WTC11 (cell line): ENCODE measurements at regions of chr4 and their contacts with region 1.

Region 1: DNA sequence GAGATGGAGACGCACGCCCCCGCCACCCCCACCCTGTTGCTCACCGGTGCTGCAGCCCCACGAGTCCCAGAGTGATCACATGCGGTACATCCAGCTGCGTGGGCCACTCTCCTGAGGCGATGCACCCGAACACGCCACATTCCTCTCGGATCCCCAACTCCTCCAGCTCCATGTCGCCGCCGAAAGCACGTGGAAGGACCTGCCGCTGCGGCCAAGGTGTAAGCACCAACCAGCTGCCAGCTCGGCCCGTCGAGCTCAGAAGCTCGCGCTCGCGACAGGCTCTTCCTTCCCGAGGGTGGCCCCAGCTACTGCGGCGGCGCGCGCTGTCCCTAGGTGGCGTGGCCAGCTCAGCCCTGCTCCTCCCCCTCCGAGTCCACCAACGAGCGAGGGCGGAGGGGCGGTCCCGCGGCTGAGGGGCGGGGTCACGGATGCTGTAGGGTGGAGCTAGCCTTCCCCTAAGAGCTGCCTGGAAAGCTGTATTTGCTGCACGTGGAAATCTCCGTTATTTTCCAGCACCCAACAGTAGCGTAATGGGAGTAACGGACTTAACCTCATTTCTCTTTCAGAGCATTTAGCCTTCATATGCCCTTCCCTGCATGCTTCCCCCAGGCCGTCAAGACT is at the start of gene PPAT:
- DNase-seq: peak; percentile 98
- ATAC-seq: peak; percentile 89
- H3K4me3 Mint-ChIP-seq: peak within 1 kb of the TSS; percentile 97
- H3K27ac Mint-ChIP-seq: peak within 1 kb of the TSS; percentile 98
- H3K4me1 Mint-ChIP-seq: peaks cover 43% of the 10 kb centered on the region
- H3K27me3 Mint-ChIP-seq: no peaks in the 10 kb centered on the region; the same call in 1 of the 2 replicates
- CTCF ChIP-seq: no peak
- total RNA-seq, gene PPAT: 83.4 to 91.0 TPM (median 89.0 TPM) in 3 replicates

Region 2: GRCh38 chr4:56387023-56388001 is 48.1 kb before region 1 on chr4 and contains the start of gene AASDH:
- CTCF ChIA-PET with region 1: interaction called, 11 read pairs
- POLR2A ChIA-PET with region 1: interaction called, 87 read pairs
- DNase-seq: peak; percentile 96
- ATAC-seq: peak; percentile 91
- H3K4me3 Mint-ChIP-seq: peak within 1 kb of the TSS; percentile 88
- H3K27ac Mint-ChIP-seq: peak within 1 kb of the TSS; percentile 100
- H3K4me1 Mint-ChIP-seq: peaks cover 25% of the 10 kb centered on the region
- H3K27me3 Mint-ChIP-seq: no peaks in the 10 kb centered on the region; the same call in 1 of the 2 replicates
- CTCF ChIP-seq: no peak
- total RNA-seq, gene AASDH: 12.6 to 15.6 TPM (median 14.6 TPM) in 3 replicates

Region 3: DNA sequence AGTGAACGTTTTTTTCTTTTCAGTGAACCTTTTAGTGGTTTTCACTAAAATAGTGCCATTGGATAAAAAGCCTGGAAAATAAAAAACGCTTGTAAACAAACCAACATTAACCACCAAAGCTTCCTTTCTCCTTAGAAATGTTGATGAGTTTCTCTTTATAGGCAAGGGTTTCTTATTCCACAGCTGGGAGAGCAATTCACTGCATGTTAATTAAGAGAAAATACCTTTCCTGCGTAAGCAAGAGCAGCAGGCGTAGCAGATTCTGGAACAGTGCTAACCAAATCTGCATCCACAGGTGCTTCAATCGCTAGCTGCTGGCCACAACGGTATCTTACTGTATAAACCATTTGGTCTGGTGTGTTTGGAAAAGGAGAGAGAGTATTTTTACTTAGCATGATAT is 34.9 kb before region 1 on chr4:
- CTCF ChIA-PET with region 1: interaction called, 6 read pairs
- POLR2A ChIA-PET with region 1: interaction called, 12 read pairs
- DNase-seq: peak; percentile 31
- ATAC-seq: peak; percentile 86
- H3K4me3 Mint-ChIP-seq: peak overlapping the region; percentile 20
- H3K27ac Mint-ChIP-seq: peak overlapping the region; percentile 98
- H3K4me1 Mint-ChIP-seq: peaks cover 26% of the 10 kb centered on the region
- H3K27me3 Mint-ChIP-seq: no peaks in the 10 kb centered on the region
- CTCF ChIP-seq: no peak

Region 4: DNA sequence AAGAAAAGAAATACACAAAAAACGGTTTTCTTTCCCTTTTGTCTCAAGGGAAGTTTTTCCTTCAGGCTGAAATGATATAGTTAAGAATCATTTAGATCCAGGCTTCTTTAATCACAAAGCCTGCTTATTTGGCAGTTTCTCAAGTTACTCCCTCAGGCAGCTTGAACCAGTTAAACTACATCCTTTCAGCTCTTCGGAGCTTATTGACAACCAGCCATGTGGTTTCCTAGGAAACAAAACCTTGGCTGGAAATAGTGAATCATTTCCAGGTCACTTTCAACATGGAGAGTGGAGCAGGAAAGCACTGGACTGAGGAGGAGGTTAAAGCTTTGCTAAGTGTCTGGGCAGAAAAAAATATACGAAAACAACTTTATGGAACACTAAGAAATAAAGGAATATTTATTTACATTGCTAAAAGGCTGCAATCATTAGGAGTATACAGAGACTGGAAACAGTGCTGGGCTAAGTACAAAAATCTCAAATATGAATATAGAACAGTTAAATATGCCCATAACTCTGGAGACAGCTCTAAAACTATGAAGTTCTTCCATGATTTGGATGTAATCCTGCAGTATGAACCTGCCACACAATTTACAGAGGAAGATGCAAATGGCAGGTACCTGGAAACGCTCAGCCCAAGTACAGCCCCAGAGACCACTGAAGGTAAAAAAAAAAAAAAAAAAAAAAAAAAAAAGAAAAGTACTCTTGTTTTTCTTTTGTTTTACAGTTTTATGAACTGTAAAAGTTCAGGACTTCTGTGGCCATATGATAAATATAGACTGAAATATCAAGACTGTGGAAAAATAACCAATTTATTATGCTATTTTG is 25.0 kb before region 1 on chr4:
- CTCF ChIA-PET with region 1: interaction called, 10 read pairs
- POLR2A ChIA-PET with region 1: interaction called, 23 read pairs
- DNase-seq: no peak
- ATAC-seq: peak; percentile 86
- H3K4me3 Mint-ChIP-seq: peak overlapping the region; percentile 58
- H3K27ac Mint-ChIP-seq: peak overlapping the region; percentile 98
- H3K4me1 Mint-ChIP-seq: peaks cover 61% of the 10 kb centered on the region
- H3K27me3 Mint-ChIP-seq: no peaks in the 10 kb centered on the region
- CTCF ChIP-seq: no peak

Region 5: GRCh38 chr4:56424697-56425514 is 10.5 kb before region 1 on chr4:
- CTCF ChIA-PET with region 1: interaction called, 16 read pairs
- POLR2A ChIA-PET with region 1: interaction called, 23 read pairs
- DNase-seq: no peak
- ATAC-seq: no peak
- H3K4me3 Mint-ChIP-seq: peak overlapping the region; percentile 49; the same call in 1 of the 2 replicates
- H3K27ac Mint-ChIP-seq: peak overlapping the region; percentile 75; the same call in 1 of the 2 replicates
- H3K4me1 Mint-ChIP-seq: peaks cover 40% of the 10 kb centered on the region
- H3K27me3 Mint-ChIP-seq: no peaks in the 10 kb centered on the region
- CTCF ChIP-seq: peak; percentile 39; the same call in 1 of the 2 replicates

Region 6: DNA sequence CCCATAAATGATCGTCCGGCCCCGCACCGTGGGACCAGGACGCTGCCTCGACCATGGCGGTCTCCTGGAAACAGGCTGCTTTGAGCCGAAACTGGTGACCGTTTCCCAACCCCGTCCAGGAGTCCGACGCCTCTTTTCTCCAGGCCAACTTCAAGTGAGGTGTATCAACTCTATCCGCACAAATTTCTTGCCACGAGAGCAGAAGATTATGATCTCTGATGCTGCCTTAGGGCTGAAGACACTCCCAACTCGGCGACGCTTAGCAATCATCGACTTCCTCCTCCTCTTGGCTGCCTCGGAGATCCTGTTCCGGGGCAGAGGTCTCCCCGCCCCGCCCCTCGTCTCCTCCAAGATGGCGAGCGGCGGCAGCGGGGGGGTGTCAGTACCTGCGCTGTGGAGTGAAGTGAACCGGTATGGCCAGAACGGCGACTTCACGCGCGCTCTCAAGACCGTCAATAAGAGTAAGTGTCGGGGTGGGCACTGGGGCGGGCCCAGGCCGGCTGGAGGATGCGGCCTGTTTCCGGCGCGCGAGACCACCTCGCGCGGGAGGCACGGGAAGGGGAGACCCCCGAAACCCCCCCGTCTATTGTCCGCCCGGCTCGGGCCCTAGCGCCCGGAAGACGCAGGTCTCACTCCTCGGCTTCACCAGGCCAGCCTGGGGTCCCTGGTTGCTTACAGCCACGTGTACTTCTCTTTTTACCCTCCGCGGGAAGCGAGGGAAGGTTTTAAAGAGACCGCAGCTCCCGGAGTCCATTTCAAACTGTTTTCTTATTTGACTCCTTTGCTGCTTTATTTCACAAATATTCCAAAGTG is 32.1 kb after region 1 on chr4 and contains the start of gene SRP72:
- CTCF ChIA-PET with region 1: no interaction called
- POLR2A ChIA-PET with region 1: interaction called, 11 read pairs
- DNase-seq: peak; percentile 87
- ATAC-seq: peak; percentile 84
- H3K4me3 Mint-ChIP-seq: peak within 1 kb of the TSS; percentile 93
- H3K27ac Mint-ChIP-seq: peak within 1 kb of the TSS; percentile 94
- H3K4me1 Mint-ChIP-seq: peaks cover 34% of the 10 kb centered on the region
- H3K27me3 Mint-ChIP-seq: no peaks in the 10 kb centered on the region
- CTCF ChIP-seq: no peak
- total RNA-seq, gene SRP72: 113 to 138 TPM (median 116 TPM) in 3 replicates

Region 7: GRCh38 chr4:56739066-56739777 is 303.8 kb after region 1 on chr4:
- CTCF ChIA-PET with region 1: no interaction called
- POLR2A ChIA-PET with region 1: no interaction called
- DNase-seq: no peak
- ATAC-seq: no peak
- H3K4me3 Mint-ChIP-seq: no peak overlapping the region
- H3K27ac Mint-ChIP-seq: no peak overlapping the region
- H3K4me1 Mint-ChIP-seq: no peaks in the 10 kb centered on the region
- H3K27me3 Mint-ChIP-seq: no peaks in the 10 kb centered on the region
- CTCF ChIP-seq: no peak